CD4-positive, alpha-beta memory T cell (primary cell): ENCODE measurements at regions of chr1 and their contacts with region 1.

Region 1: DNA sequence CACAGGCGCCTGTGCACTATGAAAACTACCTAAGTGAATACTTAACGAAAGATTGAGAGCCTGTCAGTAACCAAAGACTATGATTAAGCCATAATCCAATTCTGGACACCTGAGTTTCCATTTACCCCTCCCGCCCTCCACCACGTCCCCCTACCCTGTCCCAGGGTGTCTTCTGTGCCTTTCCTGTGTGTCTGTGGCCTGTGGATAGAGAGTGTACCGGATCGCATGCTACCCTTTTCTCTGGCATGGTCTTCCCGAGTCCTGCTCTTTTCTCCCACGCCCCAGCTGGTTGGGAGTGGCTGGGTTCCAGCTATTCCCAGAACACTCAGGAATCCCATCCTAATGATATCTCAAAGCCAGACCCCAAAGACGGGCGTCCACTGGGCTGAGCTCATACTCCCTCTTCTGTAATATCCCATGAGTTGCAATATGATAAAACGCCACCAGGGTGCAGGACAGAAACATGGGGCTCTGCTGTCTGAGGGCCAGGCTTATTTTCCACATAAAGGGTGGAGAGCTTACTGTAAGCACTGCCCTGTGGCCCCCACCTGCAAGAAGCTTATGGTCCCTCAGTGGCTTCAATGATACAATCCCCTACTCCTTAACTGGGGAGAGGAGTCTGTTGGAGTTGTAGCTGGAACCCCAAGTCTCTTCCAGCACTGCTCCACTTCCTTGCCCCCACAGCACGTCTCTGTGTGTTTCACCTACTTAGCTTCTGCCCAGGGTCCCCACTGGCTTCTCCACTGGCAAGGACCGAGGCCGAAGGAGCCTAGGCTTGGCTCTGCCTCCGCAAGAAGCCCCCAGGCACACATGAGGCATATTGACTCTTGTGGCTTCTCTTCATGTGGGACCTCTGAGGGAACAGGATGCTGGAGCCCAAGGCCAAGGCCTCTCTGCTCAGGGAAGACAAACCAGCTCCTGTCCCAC is 17.6 kb upstream of the ALX3 start:
- DNase-seq: peak in 2 of 5 donors; percentile 42 to 46
- H3K4me3 ChIP-seq: no peak overlapping the region
- H3K4me3 Mint-ChIP-seq: peak overlapping the region in 1 of 8 donors; percentile 55
- H3K27ac ChIP-seq: no peak overlapping the region
- H3K27ac Mint-ChIP-seq: no peak overlapping the region
- H3K4me1 ChIP-seq: peaks cover 12% of the 10 kb centered on the region
- H3K4me1 Mint-ChIP-seq: peaks cover 9 to 22% (median 11%) of the 10 kb centered on the region in 4 donors
- H3K27me3 ChIP-seq: peaks cover 24% of the 10 kb centered on the region
- H3K27me3 Mint-ChIP-seq: peaks cover 31 to 44% of the 10 kb centered on the region in 2 donors

Region 2: DNA sequence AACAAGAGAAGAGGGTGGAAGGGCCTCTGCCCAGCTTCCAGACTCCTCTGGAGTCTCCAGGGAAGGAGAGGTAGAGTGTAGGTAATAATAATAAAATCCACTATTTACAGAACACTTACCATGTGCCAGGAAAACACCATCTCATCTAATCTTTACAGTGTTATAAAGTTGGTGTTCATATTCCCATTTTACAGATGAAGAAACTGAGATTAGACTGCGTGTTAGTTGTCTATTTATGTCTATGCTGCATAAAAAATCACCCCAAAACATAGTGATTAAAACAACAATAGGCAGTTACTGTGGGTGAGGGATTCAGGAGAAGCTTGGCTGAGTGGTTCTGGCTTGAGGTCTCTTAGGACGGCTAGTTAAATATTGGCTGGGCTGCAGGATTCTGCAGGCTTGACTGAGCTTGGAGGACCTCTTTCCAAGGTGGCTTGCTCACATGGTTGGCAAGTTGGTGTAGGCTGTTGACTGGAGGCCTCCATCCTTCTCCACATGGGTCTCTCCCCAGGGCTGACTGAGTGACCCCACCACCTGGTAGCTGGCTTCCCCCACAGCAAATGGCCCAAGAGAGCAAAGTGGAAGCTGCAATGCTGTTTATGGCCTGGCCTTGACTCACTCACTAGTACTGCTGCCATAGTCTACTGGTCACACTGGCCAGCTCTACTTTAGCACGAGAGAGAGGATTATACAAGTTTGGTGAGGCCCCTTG is 11.1 kb before region 1 on chr1:
- CTCF ChIA-PET with region 1: interaction called, 13 read pairs
- POLR2A ChIA-PET with region 1: no interaction called
- intact Hi-C with region 1: no loop called
- DNase-seq: no peak
- H3K4me3 ChIP-seq: no peak overlapping the region
- H3K4me3 Mint-ChIP-seq: no peak overlapping the region
- H3K27ac ChIP-seq: no peak overlapping the region
- H3K27ac Mint-ChIP-seq: no peak overlapping the region
- H3K4me1 ChIP-seq: no peaks in the 10 kb centered on the region
- H3K4me1 Mint-ChIP-seq: no peaks in the 10 kb centered on the region
- H3K27me3 ChIP-seq: peaks cover under 1% of the 10 kb centered on the region
- H3K27me3 Mint-ChIP-seq: peaks cover 11 to 34% of the 10 kb centered on the region in 2 donors

Region 3: DNA sequence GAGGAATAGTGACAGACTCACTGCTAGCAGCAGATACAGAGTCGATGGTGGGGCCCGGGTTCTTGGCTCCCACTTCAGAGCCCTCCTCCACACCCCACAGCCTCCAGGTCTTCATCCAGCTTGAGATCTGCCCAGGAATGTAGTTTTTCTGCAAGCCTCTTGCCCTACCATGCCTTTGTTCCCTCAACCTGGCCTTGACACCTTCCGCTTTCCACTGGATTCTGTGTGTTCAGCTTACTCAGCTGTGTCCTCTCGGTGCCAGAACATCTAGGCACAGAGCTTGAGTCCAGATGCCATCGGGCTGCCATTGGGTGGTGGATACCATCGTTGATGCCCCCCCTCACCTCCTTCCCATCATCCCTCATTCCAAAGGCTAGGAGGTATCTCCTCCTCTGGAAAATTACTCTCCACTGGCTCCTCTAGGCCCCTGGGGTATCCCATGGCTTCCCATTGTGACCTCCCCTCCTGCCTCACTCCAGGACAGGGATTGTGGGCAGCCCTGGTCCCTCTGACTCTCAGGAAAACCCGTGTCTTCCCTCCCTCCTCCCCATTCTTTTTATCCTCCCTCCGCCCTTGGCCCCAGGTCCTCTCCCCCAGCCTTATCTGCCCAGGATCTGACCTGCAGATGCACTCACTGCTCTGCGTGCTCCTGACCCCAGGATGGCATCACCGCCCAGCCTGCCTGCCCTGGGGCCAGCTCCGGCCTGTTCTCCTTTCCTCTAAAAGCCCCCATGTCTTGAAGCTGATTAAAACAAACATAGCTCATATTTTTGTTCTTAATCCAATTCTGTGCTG is 10.0 kb after region 1 on chr1:
- CTCF ChIA-PET with region 1: interaction called, 40 read pairs
- POLR2A ChIA-PET with region 1: interaction called, 3 read pairs
- intact Hi-C with region 1: no loop called
- DNase-seq: no peak
- H3K4me3 ChIP-seq: no peak overlapping the region
- H3K4me3 Mint-ChIP-seq: no peak overlapping the region
- H3K27ac ChIP-seq: no peak overlapping the region
- H3K27ac Mint-ChIP-seq: no peak overlapping the region
- H3K4me1 ChIP-seq: no peaks in the 10 kb centered on the region
- H3K4me1 Mint-ChIP-seq: no peaks in the 10 kb centered on the region
- H3K27me3 ChIP-seq: no peaks in the 10 kb centered on the region
- H3K27me3 Mint-ChIP-seq: peaks cover 7 to 9% of the 10 kb centered on the region in 2 donors